Activated CD4-positive, alpha-beta T cell treated with anti-CD3 and anti-CD28 coated beads for 36 hours (primary cell): ENCODE measurements at regions of chr1 and their contacts with region 1.

Region 1: GRCh38 chr1:156728597-156729462 is at the start of gene ISG20L2:
- DNase-seq: peak; percentile 99
- ATAC-seq: peak; percentile 92
- H3K4me3 Mint-ChIP-seq: no peak within 1 kb of the TSS
- H3K27ac Mint-ChIP-seq: peak within 1 kb of the TSS; percentile 99
- H3K4me1 Mint-ChIP-seq: peaks cover 23% of the 10 kb centered on the region
- H3K27me3 Mint-ChIP-seq: no peaks in the 10 kb centered on the region
- total RNA-seq, gene ISG20L2: 48.4 to 65.2 TPM

Region 2: DNA sequence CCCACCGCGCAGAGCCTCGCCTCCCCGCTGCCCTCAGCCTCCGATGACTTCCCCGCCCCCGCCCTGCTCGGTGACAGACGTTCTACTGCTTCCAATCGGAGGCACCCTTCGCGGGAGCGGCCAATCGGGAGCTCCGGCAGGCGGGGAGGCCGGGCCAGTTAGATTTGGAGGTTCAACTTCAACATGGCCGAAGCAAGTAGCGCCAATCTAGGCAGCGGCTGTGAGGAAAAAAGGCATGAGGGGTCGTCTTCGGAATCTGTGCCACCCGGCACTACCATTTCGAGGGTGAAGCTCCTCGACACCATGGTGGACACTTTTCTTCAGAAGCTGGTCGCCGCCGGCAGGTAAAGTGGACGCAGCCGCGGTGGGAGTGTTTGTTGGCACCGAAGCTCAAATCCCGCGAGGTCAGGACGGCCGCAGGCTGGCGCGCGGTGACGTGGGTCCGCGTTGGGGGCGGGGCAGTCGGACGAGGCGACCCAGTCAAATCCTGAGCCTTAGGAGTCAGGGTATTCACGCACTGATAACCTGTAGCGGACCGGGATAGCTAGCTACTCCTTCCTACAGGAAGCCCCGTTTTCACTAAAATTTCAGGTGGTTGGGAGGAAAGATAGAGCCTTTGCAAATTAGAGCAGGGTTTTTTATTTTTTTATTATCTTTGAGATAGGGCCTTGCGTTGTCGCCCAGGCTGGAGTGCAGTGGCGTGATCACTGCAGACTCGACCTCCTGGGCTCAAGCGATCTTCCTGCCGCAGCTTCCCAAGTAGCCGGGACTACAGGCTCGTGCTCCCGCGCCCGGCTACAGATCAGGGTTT is 515.8 kb before region 1 on chr1 and contains the start of gene PMF1:
- CTCF ChIA-PET with region 1: no interaction called
- POLR2A ChIA-PET with region 1: no interaction called
- intact Hi-C with region 1: loop called in 1 of 2 experiments (anchors 5 kb)
- DNase-seq: peak; percentile 98
- ATAC-seq: peak; percentile 90
- H3K4me3 Mint-ChIP-seq: peak within 1 kb of the TSS; percentile 76
- H3K27ac Mint-ChIP-seq: peak within 1 kb of the TSS; percentile 98
- H3K4me1 Mint-ChIP-seq: peaks cover 41% of the 10 kb centered on the region
- H3K27me3 Mint-ChIP-seq: no peaks in the 10 kb centered on the region
- total RNA-seq, gene PMF1: 108 to 117 TPM

Region 3: GRCh38 chr1:156500797-156501499 is 227.9 kb before region 1 on chr1:
- CTCF ChIA-PET with region 1: interaction called, 3 read pairs
- POLR2A ChIA-PET with region 1: no interaction called
- intact Hi-C with region 1: loop called (anchors 1 to 5 kb)
- DNase-seq: peak; percentile 96
- ATAC-seq: peak; percentile 65
- H3K4me3 Mint-ChIP-seq: peak overlapping the region; percentile 88
- H3K27ac Mint-ChIP-seq: peak overlapping the region; percentile 99
- H3K4me1 Mint-ChIP-seq: peaks cover 73% of the 10 kb centered on the region
- H3K27me3 Mint-ChIP-seq: no peaks in the 10 kb centered on the region

Region 4: DNA sequence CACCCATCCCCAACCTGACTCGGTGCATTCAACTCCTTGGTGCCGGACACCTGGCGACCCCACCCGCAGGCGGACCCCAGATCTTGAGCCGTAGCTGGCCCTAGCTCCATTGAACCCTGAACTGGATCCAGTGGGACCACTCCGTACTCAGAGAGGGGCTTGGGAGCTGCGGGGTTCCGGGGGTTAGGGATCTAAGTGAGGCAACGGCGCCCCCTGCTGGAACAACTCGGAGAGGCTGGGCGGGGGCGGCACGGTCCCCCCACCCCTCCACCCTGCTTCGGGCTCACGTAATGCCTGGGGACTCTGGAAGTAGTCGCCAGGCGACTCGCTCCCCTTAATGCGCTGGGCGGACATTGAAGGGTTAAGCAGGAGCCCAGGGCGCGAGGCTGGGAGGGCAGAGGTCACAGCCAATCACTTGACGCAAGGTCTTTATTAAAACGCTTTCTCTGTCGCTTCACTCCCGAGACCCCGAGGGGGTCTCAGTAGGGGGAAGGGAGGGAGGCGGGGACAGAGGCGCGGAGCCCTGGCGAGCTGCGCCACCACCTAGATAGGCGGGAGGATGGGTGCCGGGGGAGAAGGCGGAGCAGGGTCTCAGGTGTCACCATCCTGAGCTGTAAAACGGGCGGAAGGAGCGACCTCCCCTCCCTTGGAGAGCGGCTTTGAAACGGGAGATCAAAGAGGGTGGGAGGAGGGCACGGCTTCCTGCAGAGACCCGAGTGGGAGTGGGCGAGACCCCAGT is 22.7 kb before region 1 on chr1:
- CTCF ChIA-PET with region 1: interaction called, 110 read pairs
- POLR2A ChIA-PET with region 1: interaction called, 5 read pairs
- intact Hi-C with region 1: loop called (anchors 1 to 2 kb)
- DNase-seq: peak; percentile 88
- ATAC-seq: peak; percentile 80
- H3K4me3 Mint-ChIP-seq: peak overlapping the region; percentile 71
- H3K27ac Mint-ChIP-seq: peak overlapping the region; percentile 58
- H3K4me1 Mint-ChIP-seq: peaks cover 24% of the 10 kb centered on the region
- H3K27me3 Mint-ChIP-seq: peaks cover 20% of the 10 kb centered on the region

Region 5: GRCh38 chr1:156751758-156752757 is 23.2 kb after region 1 on chr1:
- CTCF ChIA-PET with region 1: interaction called, 79 read pairs
- POLR2A ChIA-PET with region 1: interaction called, 26 read pairs
- intact Hi-C with region 1: loop called (anchors 1 kb)
- DNase-seq: peak; percentile 99
- ATAC-seq: peak; percentile 81
- H3K4me3 Mint-ChIP-seq: peak overlapping the region; percentile 98
- H3K27ac Mint-ChIP-seq: peak overlapping the region; percentile 93
- H3K4me1 Mint-ChIP-seq: peaks cover 33% of the 10 kb centered on the region
- H3K27me3 Mint-ChIP-seq: no peaks in the 10 kb centered on the region

Region 6: DNA sequence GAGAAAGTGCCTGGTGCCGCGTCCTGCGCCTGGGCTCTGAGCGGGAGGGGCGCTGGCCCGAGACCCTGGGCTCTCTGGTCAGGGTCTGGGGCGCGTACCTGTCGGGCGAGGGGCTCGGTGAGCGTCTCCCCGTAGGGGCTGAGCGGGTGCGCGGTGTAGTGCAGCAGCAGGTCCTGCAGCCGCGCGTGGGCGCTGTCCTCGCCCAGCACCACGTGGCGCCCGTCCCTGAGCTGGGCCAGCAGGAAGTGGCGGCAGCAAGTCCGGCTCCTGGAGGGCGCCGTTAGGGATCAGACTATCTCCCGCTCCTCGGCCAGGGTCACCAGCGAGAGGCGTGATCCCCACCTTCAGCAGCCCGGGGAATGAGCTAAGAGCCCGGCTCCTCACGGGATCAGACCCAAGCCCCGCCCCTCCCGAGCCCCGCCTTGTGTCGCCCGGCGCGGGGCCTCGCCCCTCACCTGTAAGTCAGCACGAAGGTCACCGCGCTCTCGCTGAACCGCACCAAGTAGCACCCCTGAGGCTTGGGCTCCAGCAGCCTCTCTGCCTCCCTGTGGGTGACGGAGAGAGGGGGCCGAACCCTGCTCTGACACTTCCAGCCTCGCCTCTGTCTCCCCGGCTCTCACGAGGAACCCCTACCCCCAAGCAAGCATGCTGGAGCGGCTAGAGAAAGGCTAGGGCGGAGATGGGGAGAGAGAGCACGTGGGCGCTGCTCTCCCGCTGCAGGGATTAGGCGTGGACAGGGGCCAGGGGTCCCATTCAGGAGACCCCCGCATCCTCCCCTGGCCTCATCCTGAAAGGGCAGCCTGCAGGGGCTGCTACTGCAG is 85.1 kb after region 1 on chr1:
- CTCF ChIA-PET with region 1: interaction called, 28 read pairs
- POLR2A ChIA-PET with region 1: interaction called, 6 read pairs
- intact Hi-C with region 1: loop called (anchors 1 kb)
- DNase-seq: peak; percentile 86
- ATAC-seq: peak; percentile 38
- H3K4me3 Mint-ChIP-seq: peak overlapping the region; percentile 93
- H3K27ac Mint-ChIP-seq: peak overlapping the region; percentile 100
- H3K4me1 Mint-ChIP-seq: peaks cover 61% of the 10 kb centered on the region
- H3K27me3 Mint-ChIP-seq: no peaks in the 10 kb centered on the region